Naive thymus-derived CD4-positive, alpha-beta T cell (primary cell): ENCODE measurements at regions of chr1 and their contacts with region 1.

Region 1: DNA sequence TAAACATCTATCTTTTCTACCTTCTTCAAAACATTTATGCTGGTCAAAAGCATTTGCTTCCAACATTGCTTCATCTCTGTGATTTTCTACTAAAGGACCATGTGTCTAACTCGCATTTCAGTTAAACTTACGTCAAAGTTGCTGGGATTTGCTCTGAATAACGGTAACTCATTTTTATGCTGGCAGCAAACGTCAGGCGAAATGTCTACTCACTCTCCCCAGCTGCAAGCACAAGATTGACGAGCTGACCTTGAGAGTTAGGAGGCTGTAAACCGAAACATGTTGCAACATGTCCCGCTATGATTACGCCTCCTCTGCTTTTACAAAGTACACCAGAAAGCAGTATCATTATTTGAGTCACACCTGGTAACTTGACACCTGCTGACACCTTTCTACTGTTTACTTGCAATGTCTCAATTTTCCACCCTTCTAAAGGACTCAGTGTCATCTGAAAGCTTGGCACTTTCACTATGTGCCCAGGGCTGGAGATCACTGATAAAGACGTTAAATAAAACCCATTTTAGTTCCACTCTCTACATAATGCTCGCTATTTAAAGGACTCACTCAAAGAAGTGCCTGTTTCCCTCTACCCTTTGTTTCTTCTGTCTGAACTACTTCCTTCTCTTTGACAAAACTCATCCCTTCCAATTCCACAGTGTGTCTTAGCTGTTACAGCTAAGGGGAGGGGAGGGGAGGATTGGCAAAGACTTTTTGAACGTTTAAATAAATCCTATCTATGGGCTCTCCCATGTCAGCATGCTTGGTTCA is 111.9 kb downstream of the PTPN14 start:
- DNase-seq: peak in 4 of 9 donors; percentile 5 to 47 (median 12)
- ATAC-seq: peak; percentile 58
- H3K4me3 ChIP-seq: peak overlapping the region; percentile 3
- H3K4me3 Mint-ChIP-seq: peak overlapping the region; percentile 27 to 85 (median 66)
- H3K27ac ChIP-seq: no peak overlapping the region
- H3K27ac Mint-ChIP-seq: peak overlapping the region in 8 of 9 donors; percentile 1 to 96 (median 30)
- H3K4me1 ChIP-seq: no peaks in the 10 kb centered on the region
- H3K4me1 Mint-ChIP-seq: peaks cover 15 to 59% (median 30%) of the 10 kb centered on the region in 7 donors
- H3K27me3 ChIP-seq: no peaks in the 10 kb centered on the region
- H3K27me3 Mint-ChIP-seq: peaks cover 0 to 16% (median 6%) of the 10 kb centered on the region in 5 donors

Region 2: DNA sequence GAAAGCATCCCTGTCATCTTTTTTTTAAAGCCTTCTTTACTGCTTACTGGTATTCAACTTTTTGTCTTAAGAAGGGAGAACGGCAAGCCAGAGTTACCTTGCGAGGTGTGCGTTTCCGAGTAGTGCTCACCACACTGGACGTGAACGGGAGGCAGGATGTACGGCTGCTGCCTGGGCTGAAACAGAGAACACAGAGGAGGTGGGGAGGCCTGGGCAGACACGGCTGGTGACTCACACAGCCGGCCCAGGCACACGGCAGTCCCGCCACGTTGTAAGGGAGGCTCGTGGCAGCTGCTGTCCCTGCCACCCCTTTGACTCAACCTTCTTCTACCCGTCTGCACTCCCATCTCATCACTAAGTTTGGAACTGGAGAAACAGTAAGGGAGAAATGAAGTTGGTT is 52.8 kb before region 1 on chr1:
- CTCF ChIA-PET with region 1: no interaction called
- POLR2A ChIA-PET with region 1: no interaction called
- intact Hi-C with region 1: loop called in 1 of 2 experiments (anchors 2 kb)
- DNase-seq: peak in 1 of 9 donors; percentile 34
- ATAC-seq: no peak
- H3K4me3 ChIP-seq: no peak overlapping the region
- H3K4me3 Mint-ChIP-seq: peak overlapping the region in 1 of 10 donors; percentile 80
- H3K27ac ChIP-seq: no peak overlapping the region
- H3K27ac Mint-ChIP-seq: peak overlapping the region in 2 of 9 donors; percentile 47 to 94
- H3K4me1 ChIP-seq: no peaks in the 10 kb centered on the region
- H3K4me1 Mint-ChIP-seq: peaks cover 0 to 26% (median 0%) of the 10 kb centered on the region in 7 donors
- H3K27me3 ChIP-seq: no peaks in the 10 kb centered on the region
- H3K27me3 Mint-ChIP-seq: no peaks in the 10 kb centered on the region

Region 3: DNA sequence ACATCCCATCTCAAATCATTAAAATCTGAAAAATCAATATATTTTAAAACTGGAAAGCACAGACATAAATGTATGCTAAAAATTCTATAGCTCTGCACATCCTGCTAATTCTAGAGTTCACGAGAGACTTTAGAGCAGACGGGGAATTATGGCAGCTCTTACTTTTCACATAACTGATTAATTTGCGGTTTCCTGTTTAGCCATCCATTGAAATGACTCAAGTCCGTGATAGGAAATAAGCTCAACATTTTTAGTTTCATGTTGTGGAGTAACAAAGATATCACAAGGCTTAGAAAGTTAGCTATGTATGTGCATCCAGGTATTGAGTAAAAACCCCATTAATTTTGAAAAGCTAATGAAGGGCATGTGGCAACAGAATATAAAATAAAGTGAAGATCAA is 35.4 kb before region 1 on chr1:
- CTCF ChIA-PET with region 1: no interaction called
- POLR2A ChIA-PET with region 1: no interaction called
- intact Hi-C with region 1: loop called in 1 of 2 experiments (anchors 5 kb)
- DNase-seq: no peak
- ATAC-seq: no peak
- H3K4me3 ChIP-seq: no peak overlapping the region
- H3K4me3 Mint-ChIP-seq: no peak overlapping the region
- H3K27ac ChIP-seq: no peak overlapping the region
- H3K27ac Mint-ChIP-seq: peak overlapping the region in 1 of 9 donors; percentile 3
- H3K4me1 ChIP-seq: no peaks in the 10 kb centered on the region
- H3K4me1 Mint-ChIP-seq: peaks cover 0 to 44% (median 4%) of the 10 kb centered on the region in 7 donors
- H3K27me3 ChIP-seq: no peaks in the 10 kb centered on the region
- H3K27me3 Mint-ChIP-seq: peaks cover 0 to 4% (median 0%) of the 10 kb centered on the region in 5 donors

Region 4: DNA sequence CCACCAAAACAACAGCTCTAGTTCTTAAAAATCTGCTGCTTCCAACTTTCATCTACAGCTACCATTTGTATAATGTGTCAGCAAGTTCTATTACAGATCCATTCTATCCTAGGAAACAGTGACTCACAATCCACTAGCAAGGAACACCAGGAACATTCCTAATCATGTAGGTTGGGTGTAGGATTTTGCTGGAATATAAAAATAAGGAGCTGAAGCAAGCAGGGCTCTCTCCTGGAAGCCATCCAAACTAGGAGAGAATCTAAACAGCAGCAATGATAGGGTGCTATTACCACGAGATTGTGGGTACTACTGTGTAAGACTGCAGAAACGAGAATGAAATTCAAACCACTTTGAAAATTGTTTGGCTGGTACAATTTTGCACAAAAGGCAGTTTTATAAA is 23.1 kb before region 1 on chr1:
- CTCF ChIA-PET with region 1: no interaction called
- POLR2A ChIA-PET with region 1: no interaction called
- intact Hi-C with region 1: no loop called
- DNase-seq: no peak
- ATAC-seq: no peak
- H3K4me3 ChIP-seq: no peak overlapping the region
- H3K4me3 Mint-ChIP-seq: no peak overlapping the region
- H3K27ac ChIP-seq: no peak overlapping the region
- H3K27ac Mint-ChIP-seq: no peak overlapping the region
- H3K4me1 ChIP-seq: no peaks in the 10 kb centered on the region
- H3K4me1 Mint-ChIP-seq: peaks cover 0 to 49% (median 0%) of the 10 kb centered on the region in 7 donors
- H3K27me3 ChIP-seq: no peaks in the 10 kb centered on the region
- H3K27me3 Mint-ChIP-seq: no peaks in the 10 kb centered on the region

Region 5: DNA sequence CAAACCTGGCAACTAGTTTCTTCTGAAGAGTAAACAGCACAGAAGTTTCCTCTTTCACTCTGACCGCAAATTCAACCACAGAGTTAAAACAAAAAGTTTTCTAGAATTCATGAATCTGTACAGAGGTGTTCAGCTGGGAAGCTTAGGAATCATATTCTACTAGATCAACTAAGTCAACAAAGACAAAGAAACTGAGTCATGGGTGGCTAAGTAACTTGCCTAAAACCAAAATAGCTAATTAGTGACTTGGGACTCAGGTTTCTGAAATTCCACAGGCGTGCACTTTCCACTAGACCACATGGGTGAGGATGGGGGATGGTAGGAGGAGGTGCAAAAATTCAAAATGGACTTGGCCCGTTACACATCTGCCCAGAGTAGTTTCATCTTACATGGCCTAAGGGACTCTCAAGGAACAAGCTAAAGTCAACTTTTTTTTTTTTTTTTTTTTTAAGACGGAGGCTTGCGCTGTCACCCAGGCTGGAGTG is 86.0 kb after region 1 on chr1:
- CTCF ChIA-PET with region 1: no interaction called
- POLR2A ChIA-PET with region 1: no interaction called
- intact Hi-C with region 1: loop called in 1 of 2 experiments (anchors 1 kb)
- DNase-seq: no peak
- ATAC-seq: no peak
- H3K4me3 ChIP-seq: no peak overlapping the region
- H3K4me3 Mint-ChIP-seq: peak overlapping the region in 2 of 10 donors; percentile 14 to 45
- H3K27ac ChIP-seq: no peak overlapping the region
- H3K27ac Mint-ChIP-seq: peak overlapping the region in 1 of 9 donors; percentile 9
- H3K4me1 ChIP-seq: no peaks in the 10 kb centered on the region
- H3K4me1 Mint-ChIP-seq: peaks cover 0 to 21% (median 11%) of the 10 kb centered on the region in 7 donors
- H3K27me3 ChIP-seq: no peaks in the 10 kb centered on the region
- H3K27me3 Mint-ChIP-seq: peaks cover 5 to 16% (median 9%) of the 10 kb centered on the region in 5 donors

Region 6: GRCh38 chr1:214602764-214603657 is 163.5 kb after region 1 on chr1 and contains the start of gene CENPF:
- CTCF ChIA-PET with region 1: no interaction called
- POLR2A ChIA-PET with region 1: no interaction called
- intact Hi-C with region 1: loop called in 1 of 2 experiments (anchors 1 kb)
- DNase-seq: peak; percentile 79 to 96 (median 94)
- ATAC-seq: peak; percentile 99
- H3K4me3 ChIP-seq: peak within 1 kb of the TSS; percentile 60
- H3K4me3 Mint-ChIP-seq: peak within 1 kb of the TSS; percentile 86 to 97 (median 92)
- H3K27ac ChIP-seq: peak within 1 kb of the TSS; percentile 48
- H3K27ac Mint-ChIP-seq: peak within 1 kb of the TSS; percentile 52 to 98 (median 87)
- H3K4me1 ChIP-seq: peaks cover 0 to 6% of the 10 kb centered on the region in 2 donors
- H3K4me1 Mint-ChIP-seq: peaks cover 6 to 29% (median 24%) of the 10 kb centered on the region in 7 donors
- H3K27me3 ChIP-seq: no peaks in the 10 kb centered on the region
- H3K27me3 Mint-ChIP-seq: peaks cover 0 to 2% (median 0%) of the 10 kb centered on the region in 5 donors
- total RNA-seq, gene CENPF: 2.1 to 79.9 (median 4.1) TPM